ENCODE measurements at regions of chr3 and their contacts with region 1.

Region 1: GRCh38 chr3:62622553-62623193 is 249.3 kb upstream of the FEZF2 start:
- DNase-seq: peak; percentile 25 to 51 (median 32)
- ATAC-seq: peak; percentile 53
- H3K4me3 ChIP-seq: no peak overlapping the region
- H3K27ac ChIP-seq: no peak overlapping the region
- H3K4me1 ChIP-seq: no peaks in the 10 kb centered on the region
- H3K27me3 ChIP-seq: no peaks in the 10 kb centered on the region
- CTCF ChIP-seq: peak; percentile 22 to 66 (median 44); a peak in 3 of 6 replicates
- EP300 ChIP-seq: no peak
- POLR2A ChIP-seq: no peak
- RAD21 ChIP-seq: peak; percentile 38 to 58; a peak in 3 of 4 replicates

Region 2: GRCh38 chr3:62567097-62568021 is 55.3 kb before region 1 on chr3:
- CTCF ChIA-PET with region 1: no interaction called
- POLR2A ChIA-PET with region 1: no interaction called
- in situ Hi-C with region 1: no loop called
- intact Hi-C with region 1: no loop called
- DNase-seq: no peak
- ATAC-seq: no peak
- H3K4me3 ChIP-seq: no peak overlapping the region
- H3K27ac ChIP-seq: no peak overlapping the region
- H3K4me1 ChIP-seq: no peaks in the 10 kb centered on the region
- H3K27me3 ChIP-seq: no peaks in the 10 kb centered on the region
- CTCF ChIP-seq: no peak
- EP300 ChIP-seq: no peak
- POLR2A ChIP-seq: no peak
- RAD21 ChIP-seq: no peak

Region 3: DNA sequence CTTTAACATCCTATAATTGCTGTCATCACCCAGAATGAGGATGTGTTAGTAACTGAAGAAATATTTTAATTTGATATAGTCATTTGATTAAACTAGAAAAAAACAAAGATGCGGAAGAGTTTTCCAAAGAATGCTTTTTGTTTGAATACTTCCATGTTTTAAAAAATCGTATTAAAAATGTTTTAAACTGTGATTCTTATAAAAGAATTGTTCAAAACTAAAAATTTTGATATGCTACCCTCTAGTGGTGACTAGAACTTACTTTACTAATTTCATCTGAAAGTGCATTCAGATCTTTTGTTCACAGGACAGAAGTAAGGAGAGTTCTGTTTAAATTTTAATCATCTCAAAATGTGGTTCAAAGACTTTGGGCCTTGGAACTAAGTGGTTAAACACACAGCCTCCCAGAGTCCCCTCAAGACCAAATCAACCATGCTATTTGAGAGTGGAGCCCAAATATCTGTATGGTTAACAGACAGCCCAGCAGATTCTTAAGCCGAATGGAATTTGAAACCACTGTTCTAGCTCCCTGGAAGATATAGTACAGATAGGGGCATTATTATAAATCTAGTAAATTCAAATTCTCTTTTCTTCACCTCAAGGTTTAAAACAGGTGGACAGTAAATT is 610.2 kb after region 1 on chr3:
- CTCF ChIA-PET with region 1: no interaction called
- POLR2A ChIA-PET with region 1: no interaction called
- in situ Hi-C with region 1: no loop called
- intact Hi-C with region 1: loop called (anchors 10 kb)
- DNase-seq: no peak
- ATAC-seq: no peak
- H3K4me3 ChIP-seq: no peak overlapping the region
- H3K27ac ChIP-seq: no peak overlapping the region
- H3K4me1 ChIP-seq: no peaks in the 10 kb centered on the region
- H3K27me3 ChIP-seq: no peaks in the 10 kb centered on the region
- CTCF ChIP-seq: no peak
- EP300 ChIP-seq: no peak
- POLR2A ChIP-seq: no peak
- RAD21 ChIP-seq: no peak

Region 4: DNA sequence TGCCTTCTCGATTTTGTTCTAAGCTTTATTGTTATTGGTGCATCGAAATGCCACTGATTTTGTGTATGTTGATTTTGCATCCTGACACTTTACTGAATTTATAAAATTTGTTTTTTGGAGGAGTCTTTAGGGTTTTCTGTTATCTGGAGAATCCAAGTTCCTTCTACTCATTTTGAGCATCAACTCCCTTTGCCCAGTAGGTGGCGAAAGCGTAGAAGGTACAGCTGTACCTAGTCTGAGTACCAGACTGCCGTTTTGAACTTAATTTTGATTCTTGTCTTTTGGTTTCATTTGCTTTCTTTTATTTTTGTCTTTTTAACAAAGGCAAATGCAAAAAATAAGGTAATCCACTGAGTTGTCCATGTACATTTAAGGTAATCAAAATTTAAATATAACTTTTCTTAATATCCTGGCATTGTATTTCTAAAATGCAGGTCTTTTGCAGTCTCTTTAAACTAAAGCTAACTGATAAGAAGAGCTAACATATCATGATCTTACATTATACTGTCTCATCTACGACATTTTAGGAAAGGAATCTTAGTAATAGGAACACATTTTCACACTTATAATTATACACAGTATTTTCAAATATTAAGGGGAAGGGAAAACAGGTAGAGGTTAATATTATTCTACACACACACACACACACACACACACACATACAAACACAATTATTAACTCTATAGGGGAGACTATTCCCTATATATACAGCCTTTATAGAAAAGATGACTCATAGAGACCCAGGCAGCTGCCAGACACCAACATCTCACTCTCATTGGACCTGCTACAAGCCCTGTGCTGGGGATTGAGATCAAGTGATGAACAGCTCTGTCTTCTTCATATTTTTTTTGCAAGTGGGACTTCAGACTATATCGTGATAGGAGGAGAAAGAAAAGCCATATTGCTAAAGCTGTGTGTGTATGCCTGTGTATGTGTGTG is 727.2 kb after region 1 on chr3:
- CTCF ChIA-PET with region 1: no interaction called
- POLR2A ChIA-PET with region 1: no interaction called
- in situ Hi-C with region 1: no loop called
- intact Hi-C with region 1: loop called (anchors 10 kb)
- DNase-seq: peak; percentile 16 to 52 (median 31)
- ATAC-seq: peak; percentile 67; the same call in 2 of the 3 replicates
- H3K4me3 ChIP-seq: no peak overlapping the region
- H3K27ac ChIP-seq: no peak overlapping the region
- H3K4me1 ChIP-seq: no peaks in the 10 kb centered on the region
- H3K27me3 ChIP-seq: no peaks in the 10 kb centered on the region
- CTCF ChIP-seq: peak; percentile 52 to 66 (median 58)
- EP300 ChIP-seq: no peak
- POLR2A ChIP-seq: no peak
- RAD21 ChIP-seq: peak; percentile 30 to 52

Region 5: GRCh38 chr3:63818281-63819150 is 1195.8 kb after region 1 on chr3:
- CTCF ChIA-PET with region 1: interaction called, 3 read pairs
- POLR2A ChIA-PET with region 1: no interaction called
- in situ Hi-C with region 1: loop called (anchors 10 kb)
- intact Hi-C with region 1: no loop called
- DNase-seq: peak; percentile 37 to 51 (median 46)
- ATAC-seq: peak; percentile 78
- H3K4me3 ChIP-seq: no peak overlapping the region
- H3K27ac ChIP-seq: no peak overlapping the region
- H3K4me1 ChIP-seq: no peaks in the 10 kb centered on the region
- H3K27me3 ChIP-seq: no peaks in the 10 kb centered on the region
- CTCF ChIP-seq: peak; percentile 65 to 72 (median 68)
- EP300 ChIP-seq: no peak
- POLR2A ChIP-seq: no peak
- RAD21 ChIP-seq: peak; percentile 66 to 73

Region 6: GRCh38 chr3:64484289-64484992 is 1861.8 kb after region 1 on chr3:
- CTCF ChIA-PET with region 1: no interaction called
- POLR2A ChIA-PET with region 1: no interaction called
- in situ Hi-C with region 1: no loop called
- intact Hi-C with region 1: loop called (anchors 10 kb)
- DNase-seq: peak; percentile 41 to 60 (median 50)
- ATAC-seq: peak; percentile 95
- H3K4me3 ChIP-seq: no peak overlapping the region
- H3K27ac ChIP-seq: no peak overlapping the region
- H3K4me1 ChIP-seq: no peaks in the 10 kb centered on the region
- H3K27me3 ChIP-seq: no peaks in the 10 kb centered on the region; a peak in 1 of 5 replicates
- CTCF ChIP-seq: peak; percentile 61 to 74 (median 73)
- EP300 ChIP-seq: no peak
- POLR2A ChIP-seq: no peak
- RAD21 ChIP-seq: peak; percentile 67 to 78